ENCODE measurements at regions of chr15 and their contacts with region 1.

Region 1: DNA sequence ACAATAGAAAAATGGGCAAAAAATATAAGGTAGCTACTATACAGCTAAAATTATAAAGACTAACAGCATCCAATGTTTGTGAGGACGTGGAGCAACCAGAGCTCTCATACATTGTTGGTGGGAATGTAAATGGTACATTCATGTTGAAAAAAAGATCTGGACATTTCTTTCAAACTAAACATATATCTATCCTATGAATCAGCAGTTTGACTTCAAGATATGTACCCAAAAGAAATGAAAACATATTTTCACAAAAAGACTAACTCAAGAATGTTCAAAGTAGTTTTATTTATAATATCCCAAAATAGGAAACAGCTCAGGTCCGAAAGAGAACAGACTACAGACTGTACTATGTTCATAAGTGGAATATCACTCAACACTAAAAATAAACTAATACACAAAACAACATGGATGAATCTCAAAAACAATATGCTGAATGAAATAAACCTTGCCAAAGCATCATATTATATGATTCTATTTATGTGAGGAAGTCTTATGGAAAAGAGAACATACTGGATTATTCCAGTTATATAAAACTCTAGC is 8.8 kb upstream of the TTBK2 start:
- DNase-seq: no peak
- ATAC-seq: no peak
- H3K4me3 ChIP-seq: no peak overlapping the region
- H3K27ac ChIP-seq: no peak overlapping the region
- H3K4me1 ChIP-seq: peaks cover 0 to 2% of the 10 kb centered on the region in 2 donors
- H3K27me3 ChIP-seq: no peaks in the 10 kb centered on the region

Region 2: DNA sequence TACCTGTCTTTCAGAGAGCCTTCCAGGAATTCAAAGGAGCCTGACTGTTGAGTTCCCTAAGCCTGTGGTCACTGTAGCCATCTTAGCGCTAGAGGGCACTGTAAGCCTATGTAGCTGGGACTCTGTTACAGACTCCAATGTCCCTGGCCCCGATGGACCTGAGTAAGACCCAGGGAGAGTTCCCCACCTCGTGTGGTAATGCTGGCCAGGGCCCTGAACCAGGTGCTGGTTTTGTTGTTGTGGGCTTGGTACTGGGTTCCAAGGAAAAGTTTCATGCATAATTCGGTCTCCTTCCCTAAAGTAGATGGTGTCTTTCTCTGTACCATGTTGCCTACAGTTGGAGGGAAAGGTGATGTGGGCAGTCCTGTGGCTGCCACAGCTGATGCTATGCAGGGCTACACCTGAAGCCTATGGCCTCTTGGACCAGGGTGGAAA is 224.9 kb before region 1 on chr15:
- intact Hi-C with region 1: loop called (anchors 2 kb)
- DNase-seq: peak in 1 of 2 donors; percentile 71
- ATAC-seq: peak; percentile 84
- H3K4me3 ChIP-seq: no peak overlapping the region
- H3K27ac ChIP-seq: no peak overlapping the region
- H3K4me1 ChIP-seq: no peaks in the 10 kb centered on the region
- H3K27me3 ChIP-seq: no peaks in the 10 kb centered on the region

Region 3: DNA sequence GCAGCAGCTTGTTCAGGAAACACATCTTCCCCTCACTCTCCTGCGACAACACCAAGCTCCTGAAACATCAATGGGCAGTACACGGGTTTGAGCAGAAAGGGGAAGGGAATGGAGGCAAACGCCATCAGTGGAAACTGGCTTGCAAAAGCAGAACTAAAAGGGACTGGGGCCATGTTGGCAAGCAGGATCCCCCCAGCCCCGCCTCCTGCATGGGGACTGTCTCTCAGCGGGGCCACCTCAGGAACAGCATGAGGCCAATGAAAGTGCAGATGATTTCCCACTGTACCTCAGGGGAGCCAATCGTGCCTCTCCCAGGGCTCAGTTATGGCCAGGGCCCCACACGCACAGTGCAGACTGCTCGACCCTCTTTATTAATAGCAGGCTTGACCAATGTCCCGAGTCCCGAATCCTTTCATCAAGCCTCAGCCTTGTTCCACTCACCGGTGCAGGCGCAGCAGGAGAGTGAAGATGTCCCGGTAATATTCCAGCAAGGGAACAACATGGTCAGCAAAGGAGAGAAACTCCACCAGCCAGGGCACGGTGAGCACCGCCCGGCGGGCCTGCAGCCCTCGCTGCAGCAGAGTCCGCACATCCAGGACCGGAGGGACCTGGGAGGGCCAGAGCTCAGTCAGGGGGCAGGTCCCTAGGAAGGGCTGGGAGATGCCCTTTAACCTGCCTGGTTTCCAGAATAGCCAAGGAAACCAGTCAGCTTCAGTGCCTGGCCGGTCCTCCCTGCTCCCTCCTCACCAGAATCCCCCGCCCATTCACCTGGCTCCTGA is 199.0 kb before region 1 on chr15:
- intact Hi-C with region 1: loop called in 1 of 2 experiments (anchors 5 kb)
- DNase-seq: peak in 1 of 2 donors; percentile 61
- ATAC-seq: no peak
- H3K4me3 ChIP-seq: no peak overlapping the region
- H3K27ac ChIP-seq: no peak overlapping the region
- H3K4me1 ChIP-seq: no peaks in the 10 kb centered on the region
- H3K27me3 ChIP-seq: no peaks in the 10 kb centered on the region